Caco-2 (cell line): ENCODE measurements at regions of chr5 and their contacts with region 1.

Region 1: DNA sequence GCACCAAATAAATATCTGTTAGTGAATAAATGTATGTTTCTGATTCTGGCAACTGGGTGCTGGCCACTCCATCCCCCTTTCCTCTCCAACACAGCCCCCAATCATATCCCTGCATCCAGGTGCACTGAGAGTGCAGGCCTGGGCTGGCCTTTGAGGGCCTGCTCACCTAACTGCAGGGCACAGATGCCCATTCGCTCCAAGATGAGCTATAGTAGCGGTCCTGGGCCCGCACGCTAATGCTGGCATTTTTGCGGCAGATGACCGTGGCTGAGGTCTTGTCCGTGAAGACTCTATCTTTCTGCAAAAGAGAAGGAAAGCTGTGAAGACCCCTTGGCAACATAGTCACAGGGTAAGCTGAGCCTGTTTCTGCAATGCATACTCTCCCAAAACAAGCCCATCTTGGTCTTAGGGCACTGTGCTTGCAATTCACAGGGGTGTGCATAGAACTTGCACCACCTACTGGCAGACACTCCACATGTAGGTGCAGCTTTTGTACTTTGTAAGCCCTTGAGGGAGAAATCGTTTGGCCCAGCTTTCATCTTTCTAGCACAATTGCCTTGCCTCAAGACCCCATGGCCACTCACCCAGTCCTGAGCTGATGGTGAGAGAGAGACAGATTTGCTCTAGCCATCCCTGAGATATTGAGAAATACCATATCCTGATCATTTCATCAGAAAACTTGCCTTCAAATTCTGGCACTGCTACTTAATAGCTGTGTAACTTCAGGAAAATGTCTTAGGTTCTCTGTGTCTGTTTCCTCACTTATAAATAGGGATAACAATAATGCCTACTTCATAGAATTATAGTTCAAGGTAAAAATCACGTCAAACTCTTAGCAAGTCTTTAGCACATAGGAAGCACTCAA is 13.5 kb downstream of the IL12B start:
- DNase-seq: peak; percentile 48 to 52
- H3K4me3 ChIP-seq: no peak overlapping the region
- H3K4me3 Mint-ChIP-seq: no peak overlapping the region
- H3K27ac Mint-ChIP-seq: no peak overlapping the region
- H3K4me1 ChIP-seq: no peaks in the 10 kb centered on the region
- H3K4me1 Mint-ChIP-seq: no peaks in the 10 kb centered on the region
- H3K27me3 ChIP-seq: no peaks in the 10 kb centered on the region
- H3K27me3 Mint-ChIP-seq: peaks cover 6% of the 10 kb centered on the region
- CTCF ChIP-seq: peak; percentile 70 to 80

Region 2: DNA sequence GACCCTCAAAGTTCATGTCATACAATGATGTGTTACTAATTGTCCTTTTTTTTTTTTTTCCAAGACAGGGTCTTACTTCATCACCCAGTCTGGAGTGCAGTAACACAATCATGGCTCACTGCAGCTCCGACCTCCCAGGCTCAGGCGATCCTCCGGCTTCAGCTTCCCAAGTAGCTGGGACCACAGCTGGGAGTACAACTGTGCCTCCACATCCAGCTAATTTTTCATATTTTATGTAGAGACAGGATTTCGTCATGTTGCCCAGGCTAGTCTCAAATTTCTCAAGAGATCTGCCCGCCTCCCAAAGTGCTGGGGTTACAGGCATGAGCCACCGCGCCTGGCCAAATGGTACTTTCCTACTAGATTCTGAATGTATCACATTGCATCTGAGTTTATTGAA is 167.7 kb before region 1 on chr5:
- CTCF ChIA-PET with region 1: no interaction called
- POLR2A ChIA-PET with region 1: no interaction called
- intact Hi-C with region 1: no loop called
- DNase-seq: no peak
- H3K4me3 ChIP-seq: no peak overlapping the region
- H3K4me3 Mint-ChIP-seq: no peak overlapping the region
- H3K27ac Mint-ChIP-seq: no peak overlapping the region
- H3K4me1 ChIP-seq: no peaks in the 10 kb centered on the region
- H3K4me1 Mint-ChIP-seq: no peaks in the 10 kb centered on the region
- H3K27me3 ChIP-seq: no peaks in the 10 kb centered on the region
- H3K27me3 Mint-ChIP-seq: peaks cover 12% of the 10 kb centered on the region
- CTCF ChIP-seq: no peak

Region 3: GRCh38 chr5:159262859-159263567 is 53.7 kb before region 1 on chr5 and contains the start of gene UBLCP1:
- CTCF ChIA-PET with region 1: no interaction called
- POLR2A ChIA-PET with region 1: no interaction called
- intact Hi-C with region 1: no loop called
- DNase-seq: peak; percentile 79 to 82
- H3K4me3 ChIP-seq: peak within 1 kb of the TSS; percentile 85
- H3K4me3 Mint-ChIP-seq: peak within 1 kb of the TSS; percentile 89
- H3K27ac Mint-ChIP-seq: peak within 1 kb of the TSS; percentile 95
- H3K4me1 ChIP-seq: peaks cover 12% of the 10 kb centered on the region; the same call in 1 of the 2 replicates
- H3K4me1 Mint-ChIP-seq: peaks cover 13% of the 10 kb centered on the region
- H3K27me3 ChIP-seq: peaks cover 1% of the 10 kb centered on the region
- H3K27me3 Mint-ChIP-seq: peaks cover 11% of the 10 kb centered on the region
- CTCF ChIP-seq: no peak
- total RNA-seq, gene UBLCP1: 23.0 and 23.2 TPM in 2 replicates

Region 4: GRCh38 chr5:159286420-159287035 is 30.2 kb before region 1 on chr5:
- CTCF ChIA-PET with region 1: interaction called, 20 read pairs
- POLR2A ChIA-PET with region 1: no interaction called
- intact Hi-C with region 1: loop called (anchors 1 kb)
- DNase-seq: peak in 1 of 2 experiments; percentile 12
- H3K4me3 ChIP-seq: no peak overlapping the region
- H3K4me3 Mint-ChIP-seq: no peak overlapping the region
- H3K27ac Mint-ChIP-seq: no peak overlapping the region
- H3K4me1 ChIP-seq: peaks cover 7% of the 10 kb centered on the region; the same call in 1 of the 2 replicates
- H3K4me1 Mint-ChIP-seq: no peaks in the 10 kb centered on the region
- H3K27me3 ChIP-seq: no peaks in the 10 kb centered on the region
- H3K27me3 Mint-ChIP-seq: no peaks in the 10 kb centered on the region
- CTCF ChIP-seq: peak; percentile 26 to 40